Posterior cingulate gyrus (tissue), 11 donors: ENCODE measurements at regions of chr19 and their contacts with region 1.

Region 1: GRCh38 chr19:48445606-48446481 is at the start of gene GRWD1:
- DNase-seq: peak; percentile 80 to 98 (median 88)

Region 2: DNA sequence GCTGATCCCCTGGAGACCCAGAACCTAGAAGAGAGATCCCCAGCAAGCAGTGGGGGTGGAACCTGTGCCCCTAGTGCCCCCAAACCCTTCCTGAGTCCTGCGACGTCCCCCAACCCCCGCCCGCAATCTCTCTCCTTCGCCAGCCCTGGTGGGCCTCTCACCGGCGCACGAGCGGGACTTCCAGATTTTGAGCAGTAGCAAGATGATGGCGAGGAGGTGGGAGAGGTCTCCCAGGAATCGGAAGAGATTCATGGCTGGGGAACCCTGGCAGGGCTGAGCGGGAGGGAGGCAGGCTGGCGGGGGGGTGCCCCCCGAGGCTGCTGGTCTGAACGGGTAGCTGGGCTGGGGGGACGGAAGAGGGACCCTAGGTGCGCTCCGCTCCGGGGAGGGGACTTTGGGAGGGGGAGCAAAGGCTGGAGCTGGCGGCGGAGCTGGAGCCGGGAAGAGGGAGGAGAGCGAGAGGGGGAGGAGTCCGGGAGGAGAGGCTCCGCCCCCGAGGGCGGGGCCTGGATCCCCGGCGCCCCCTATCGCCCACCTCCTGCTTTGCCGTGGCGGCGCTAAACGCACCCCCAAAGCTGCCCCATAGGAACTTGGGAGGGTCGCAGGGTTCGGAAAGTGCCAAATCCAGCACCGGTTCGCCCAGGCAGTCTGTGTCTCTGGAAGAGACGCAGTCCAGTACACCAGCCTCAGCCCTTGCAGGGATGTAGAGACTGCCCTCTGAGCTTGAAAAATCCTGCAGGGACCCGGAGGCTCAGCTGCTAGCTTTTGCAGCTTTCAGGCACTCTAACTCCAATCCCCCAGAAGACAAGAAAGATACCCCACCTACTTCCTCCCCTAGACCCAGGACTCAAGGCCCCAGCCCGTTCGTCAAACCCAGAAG is 54.5 kb before region 1 on chr19 and contains the start of gene KDELR1:
- intact Hi-C with region 1: loop called (anchors 5 kb)
- DNase-seq: peak; percentile 74 to 98 (median 85)

Region 3: DNA sequence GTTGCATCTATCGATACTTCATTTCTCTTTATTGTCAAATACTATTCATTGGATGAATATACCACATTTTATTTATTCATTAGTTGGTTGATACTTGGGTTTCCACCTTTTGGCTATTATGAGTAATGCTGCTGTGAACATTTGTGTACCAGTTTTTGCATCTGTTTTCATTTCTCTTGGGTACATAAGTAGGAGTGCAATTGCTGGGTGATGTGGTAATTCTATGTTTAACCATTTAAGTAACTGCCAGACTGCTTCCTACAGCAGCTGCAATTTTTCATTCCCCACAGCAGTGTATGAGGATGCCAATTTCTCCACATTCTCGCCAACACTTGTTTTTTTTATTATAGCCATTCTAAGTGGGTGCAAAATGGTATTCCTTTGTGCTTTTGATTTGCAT is 12.2 kb after region 1 on chr19:
- intact Hi-C with region 1: no loop called
- DNase-seq: no peak

Region 4: GRCh38 chr19:48468775-48469288 is 23.0 kb after region 1 on chr19:
- intact Hi-C with region 1: loop called (anchors 2 kb)
- DNase-seq: peak; percentile 99 to 100 (median 100)